Breast epithelium (tissue), 4 donors: ENCODE measurements at regions of chr7 and their contacts with region 1.

Region 1: GRCh38 chr7:26653430-26653911 is 210.9 kb downstream of the SKAP2 start:
- DNase-seq: no peak
- H3K4me3 ChIP-seq: no peak overlapping the region
- H3K27ac ChIP-seq: no peak overlapping the region
- H3K4me1 ChIP-seq: no peaks in the 10 kb centered on the region
- H3K27me3 ChIP-seq: no peaks in the 10 kb centered on the region
- CTCF ChIP-seq: no peak
- POLR2A ChIP-seq: no peak

Region 2: DNA sequence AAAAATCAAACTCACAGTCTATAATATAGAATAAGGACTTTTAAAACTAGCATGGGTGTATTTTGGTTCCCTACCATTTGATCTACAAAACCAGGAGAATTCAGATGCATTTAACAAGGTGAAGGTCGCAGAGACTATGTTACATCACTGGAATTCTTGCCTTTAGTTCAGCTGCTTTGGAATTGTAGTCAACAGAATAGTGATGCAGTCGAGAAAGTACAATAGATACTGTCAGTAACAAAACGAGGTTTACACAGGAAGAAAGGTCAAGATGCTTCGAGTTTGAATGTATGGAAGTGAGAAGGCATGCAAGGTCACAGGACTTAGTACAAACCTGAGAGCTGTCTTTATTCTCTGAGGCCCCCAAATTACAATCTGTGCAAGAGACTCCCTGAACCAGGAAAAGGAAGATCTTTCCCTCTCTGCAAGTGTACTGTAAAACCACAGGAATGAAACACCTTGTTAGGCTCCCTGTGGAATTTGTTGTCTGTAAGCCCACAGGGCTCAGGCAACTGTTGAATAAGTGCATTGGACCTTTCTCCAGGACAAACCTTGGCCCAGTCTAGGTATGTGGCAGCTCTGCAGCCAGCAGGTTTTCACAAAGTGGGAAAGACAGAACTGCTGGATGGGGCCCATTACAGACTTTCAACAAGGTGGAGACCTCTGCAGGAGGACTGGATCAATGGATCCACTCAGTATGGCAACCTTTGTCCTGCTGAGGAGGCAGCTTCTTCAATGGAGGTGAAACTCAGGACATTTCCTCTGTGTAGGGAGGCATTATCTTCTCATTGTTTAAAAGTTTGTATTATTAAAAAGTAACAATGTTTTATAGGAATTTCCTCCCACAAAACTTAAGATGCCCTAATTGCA is 1795.1 kb before region 1 on chr7:
- intact Hi-C with region 1: no loop called
- DNase-seq: no peak
- H3K4me3 ChIP-seq: no peak overlapping the region
- H3K27ac ChIP-seq: no peak overlapping the region
- H3K4me1 ChIP-seq: no peaks in the 10 kb centered on the region
- H3K27me3 ChIP-seq: no peaks in the 10 kb centered on the region
- CTCF ChIP-seq: no peak
- POLR2A ChIP-seq: no peak

Region 3: DNA sequence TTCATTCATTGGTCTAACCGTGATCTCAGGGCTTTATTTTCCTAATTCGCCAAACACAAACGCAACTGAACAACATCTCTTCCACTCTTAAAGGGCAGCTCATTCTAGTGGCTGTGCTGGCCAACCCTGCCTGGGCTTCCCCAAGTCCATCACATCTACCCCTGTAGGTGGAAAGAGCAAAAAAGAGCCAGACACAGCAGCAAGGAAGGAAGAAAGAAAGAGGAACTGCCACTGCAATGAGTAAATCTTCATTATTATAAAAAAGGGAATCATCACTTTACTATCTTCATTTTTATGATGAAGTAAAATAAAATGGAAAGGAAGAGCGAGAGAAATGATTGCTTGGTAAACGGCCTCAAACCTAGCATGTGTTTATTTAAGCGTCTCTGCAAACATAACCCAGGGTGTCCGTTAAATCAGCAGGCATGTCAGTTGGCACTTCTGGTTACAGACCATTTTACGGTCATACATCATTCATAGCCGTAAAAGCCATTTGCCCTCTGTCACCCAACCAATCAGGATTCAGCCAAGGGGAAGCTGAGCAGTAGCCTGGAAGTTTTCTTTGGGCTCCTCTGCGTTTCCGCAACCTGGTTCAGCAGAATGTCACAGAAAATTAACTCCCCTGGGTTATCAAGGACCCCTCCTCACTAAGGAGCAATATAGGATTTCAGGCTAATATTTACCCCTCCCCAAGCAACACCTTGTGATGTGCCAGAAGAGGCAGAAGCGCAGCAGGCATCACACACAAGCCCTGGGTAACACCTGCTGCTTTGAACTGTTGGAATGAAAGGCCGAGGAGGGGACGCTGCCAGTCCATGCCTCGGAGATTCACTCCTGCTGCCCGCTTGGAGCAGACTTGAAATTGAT is 127.8 kb before region 1 on chr7:
- intact Hi-C with region 1: no loop called
- DNase-seq: no peak
- H3K4me3 ChIP-seq: no peak overlapping the region
- H3K27ac ChIP-seq: no peak overlapping the region
- H3K4me1 ChIP-seq: no peaks in the 10 kb centered on the region
- H3K27me3 ChIP-seq: peaks cover 0 to 17% of the 10 kb centered on the region in 2 donors
- CTCF ChIP-seq: no peak
- POLR2A ChIP-seq: no peak

Region 4: GRCh38 chr7:26937939-26938623 is 284.6 kb after region 1 on chr7:
- intact Hi-C with region 1: no loop called
- DNase-seq: no peak
- H3K4me3 ChIP-seq: no peak overlapping the region
- H3K27ac ChIP-seq: no peak overlapping the region
- H3K4me1 ChIP-seq: no peaks in the 10 kb centered on the region
- H3K27me3 ChIP-seq: no peaks in the 10 kb centered on the region
- CTCF ChIP-seq: no peak
- POLR2A ChIP-seq: no peak

Region 5: DNA sequence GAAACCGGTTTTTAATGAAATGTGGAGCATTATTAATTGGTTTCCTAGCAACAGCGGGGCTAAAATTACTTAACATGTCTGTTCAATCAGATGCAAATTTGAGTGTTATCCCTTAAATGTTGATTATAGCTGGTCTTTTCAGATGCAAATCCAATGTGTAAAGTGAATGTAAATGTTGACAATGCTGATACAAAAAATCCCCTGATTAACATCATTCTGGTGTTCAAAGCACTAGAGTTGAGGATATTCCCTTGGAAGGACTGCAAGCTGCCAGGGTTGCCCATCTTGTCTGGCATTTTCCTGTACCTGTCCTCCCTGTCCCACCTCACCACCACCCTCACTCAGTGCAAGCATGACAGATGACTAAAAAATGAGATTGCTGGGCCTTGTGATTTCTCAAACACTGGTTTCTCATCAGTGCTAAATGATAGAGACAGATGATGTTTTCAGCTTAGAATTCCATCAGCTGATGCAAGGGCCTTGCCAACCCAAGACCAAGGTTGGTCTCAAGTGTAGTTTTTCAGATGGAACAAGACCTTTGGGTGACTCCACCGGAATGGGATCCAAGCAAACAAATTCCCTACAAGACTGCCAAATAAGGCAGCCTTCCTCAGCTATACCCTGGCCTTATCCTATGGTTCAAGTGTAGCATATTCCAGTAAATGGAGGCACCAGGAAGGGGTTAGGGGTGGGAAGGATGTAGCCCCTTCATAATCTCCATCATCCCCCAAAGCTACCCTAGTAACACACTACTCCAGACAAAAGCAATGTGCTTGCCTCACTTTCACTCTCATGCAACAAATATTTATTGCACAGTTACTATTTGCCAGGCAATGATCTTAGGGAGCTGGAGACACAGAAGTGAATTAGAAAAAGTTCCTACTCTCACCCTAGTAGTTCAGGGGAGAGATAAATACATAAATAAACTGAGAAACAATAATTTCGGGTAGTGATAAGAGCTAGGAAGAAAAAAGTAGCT is 1472.2 kb after region 1 on chr7:
- intact Hi-C with region 1: loop called (anchors 10 kb)
- DNase-seq: no peak
- H3K4me3 ChIP-seq: no peak overlapping the region
- H3K27ac ChIP-seq: peak overlapping the region in 1 of 2 donors; percentile 14
- H3K4me1 ChIP-seq: no peaks in the 10 kb centered on the region
- H3K27me3 ChIP-seq: no peaks in the 10 kb centered on the region
- CTCF ChIP-seq: no peak
- POLR2A ChIP-seq: no peak